ENCODE measurements at regions of chr2 and their contacts with region 1.

Region 1: GRCh38 chr2:106104332-106105062 is 89.6 kb downstream of the UXS1 start:
- DNase-seq: peak; percentile 46
- H3K4me3 ChIP-seq: no peak overlapping the region
- H3K27ac ChIP-seq: no peak overlapping the region
- H3K4me1 ChIP-seq: peaks cover 3% of the 10 kb centered on the region
- H3K27me3 ChIP-seq: no peaks in the 10 kb centered on the region
- CTCF ChIP-seq: peak; percentile 95 to 99

Region 2: GRCh38 chr2:105896765-105897163 is 207.7 kb before region 1 on chr2:
- CTCF ChIA-PET with region 1: no interaction called
- dilution Hi-C with region 1: no loop called
- in situ Hi-C with region 1: no loop called
- intact Hi-C with region 1: no loop called
- DNase-seq: no peak
- H3K4me3 ChIP-seq: no peak overlapping the region
- H3K27ac ChIP-seq: no peak overlapping the region
- H3K4me1 ChIP-seq: no peaks in the 10 kb centered on the region
- H3K27me3 ChIP-seq: no peaks in the 10 kb centered on the region
- CTCF ChIP-seq: peak in 1 of 2 donors; percentile 17

Region 3: DNA sequence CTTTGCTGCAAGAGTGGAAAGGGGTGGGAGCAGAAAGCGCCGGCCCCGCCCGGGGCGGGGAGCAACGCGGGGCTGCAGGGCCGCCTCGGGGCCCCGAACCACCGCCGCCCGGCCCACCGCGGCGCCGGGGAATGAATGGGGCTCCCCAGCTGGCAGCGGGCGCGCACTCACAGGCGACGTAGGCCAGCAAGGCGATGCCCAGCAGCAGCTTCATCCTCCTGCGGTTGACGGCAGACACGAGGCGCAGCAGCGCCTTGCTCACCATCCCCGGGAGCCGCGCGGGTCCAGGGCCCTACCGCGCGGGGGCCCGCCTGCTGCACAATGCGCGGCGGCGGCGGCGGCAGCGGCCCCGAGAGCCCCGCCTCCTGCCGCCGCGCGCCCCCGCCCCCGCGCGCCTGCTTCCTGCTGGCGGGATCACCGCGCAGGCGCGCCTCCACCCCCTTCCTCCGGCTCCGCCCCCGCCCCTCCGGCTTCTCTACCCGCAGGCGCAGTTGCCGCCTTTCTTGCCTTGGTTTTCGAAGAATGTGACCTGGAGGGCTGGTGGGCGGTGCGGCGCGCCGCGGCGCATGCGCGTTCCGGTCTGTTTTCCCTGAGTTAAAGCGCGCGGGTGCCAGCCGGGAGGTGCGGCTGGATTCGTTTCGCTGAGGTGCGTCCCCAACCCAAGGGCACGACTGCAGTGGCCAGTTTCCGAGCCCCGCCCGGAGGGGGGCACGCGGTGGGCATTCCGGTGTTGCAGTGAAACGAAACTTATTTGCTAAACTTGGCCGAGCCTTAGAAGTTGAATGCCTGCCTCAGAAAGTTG is 89.7 kb after region 1 on chr2 and contains the start of gene UXS1:
- CTCF ChIA-PET with region 1: no interaction called
- dilution Hi-C with region 1: no loop called
- in situ Hi-C with region 1: no loop called
- intact Hi-C with region 1: loop called (anchors 5 kb)
- DNase-seq: peak; percentile 95
- H3K4me3 ChIP-seq: peak within 1 kb of the TSS; percentile 82 to 96 (median 86)
- H3K27ac ChIP-seq: peak within 1 kb of the TSS; percentile 84
- H3K4me1 ChIP-seq: peaks cover 19% of the 10 kb centered on the region
- H3K27me3 ChIP-seq: no peaks in the 10 kb centered on the region
- CTCF ChIP-seq: no peak
- total RNA-seq, gene UXS1: 43.8 to 65.3 TPM

Region 4: DNA sequence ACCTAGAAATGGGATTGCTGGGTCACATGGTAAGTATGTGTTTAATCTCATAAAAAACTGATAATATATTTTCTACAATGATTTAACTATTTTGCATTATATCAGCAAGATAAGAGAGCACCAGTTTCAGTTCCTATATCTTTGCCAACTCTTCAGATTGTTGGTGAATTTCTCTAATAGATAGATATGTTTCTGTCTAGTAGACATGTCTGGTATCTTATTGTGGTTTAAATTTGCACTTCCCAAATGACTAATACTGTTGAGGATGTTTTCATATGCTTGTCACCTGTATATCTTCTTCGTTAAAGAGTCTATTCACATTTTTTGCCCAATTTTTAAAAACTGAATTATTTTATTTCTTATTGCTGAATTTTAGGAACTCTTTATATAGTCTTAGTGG is 203.4 kb after region 1 on chr2:
- CTCF ChIA-PET with region 1: no interaction called
- dilution Hi-C with region 1: no loop called
- in situ Hi-C with region 1: no loop called
- intact Hi-C with region 1: no loop called
- DNase-seq: no peak
- H3K4me3 ChIP-seq: no peak overlapping the region
- H3K27ac ChIP-seq: no peak overlapping the region
- H3K4me1 ChIP-seq: no peaks in the 10 kb centered on the region
- H3K27me3 ChIP-seq: peaks cover 2% of the 10 kb centered on the region
- CTCF ChIP-seq: no peak

Region 5: DNA sequence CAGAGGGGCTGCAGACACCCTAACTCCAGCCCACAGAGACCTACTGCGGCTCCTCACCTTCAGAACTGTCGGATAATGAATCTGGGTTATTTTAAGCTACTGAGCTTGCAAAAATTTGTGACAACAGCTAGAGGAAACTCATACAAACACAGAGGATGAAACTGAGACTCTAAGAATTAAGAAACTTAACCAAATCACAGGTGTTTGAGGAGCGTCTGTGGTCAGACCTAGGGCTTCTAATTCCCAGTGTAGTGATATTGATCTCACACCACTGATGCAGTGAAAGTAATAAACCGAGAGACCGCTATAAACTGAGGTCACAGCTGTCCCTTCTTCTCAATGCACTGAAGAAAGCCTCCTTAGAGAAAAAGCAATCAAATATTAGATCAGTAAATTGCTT is 253.6 kb after region 1 on chr2:
- CTCF ChIA-PET with region 1: no interaction called
- dilution Hi-C with region 1: loop called (anchors 25 kb)
- in situ Hi-C with region 1: no loop called
- intact Hi-C with region 1: no loop called
- DNase-seq: no peak
- H3K4me3 ChIP-seq: no peak overlapping the region
- H3K27ac ChIP-seq: no peak overlapping the region
- H3K4me1 ChIP-seq: no peaks in the 10 kb centered on the region
- H3K27me3 ChIP-seq: no peaks in the 10 kb centered on the region
- CTCF ChIP-seq: no peak

Region 6: DNA sequence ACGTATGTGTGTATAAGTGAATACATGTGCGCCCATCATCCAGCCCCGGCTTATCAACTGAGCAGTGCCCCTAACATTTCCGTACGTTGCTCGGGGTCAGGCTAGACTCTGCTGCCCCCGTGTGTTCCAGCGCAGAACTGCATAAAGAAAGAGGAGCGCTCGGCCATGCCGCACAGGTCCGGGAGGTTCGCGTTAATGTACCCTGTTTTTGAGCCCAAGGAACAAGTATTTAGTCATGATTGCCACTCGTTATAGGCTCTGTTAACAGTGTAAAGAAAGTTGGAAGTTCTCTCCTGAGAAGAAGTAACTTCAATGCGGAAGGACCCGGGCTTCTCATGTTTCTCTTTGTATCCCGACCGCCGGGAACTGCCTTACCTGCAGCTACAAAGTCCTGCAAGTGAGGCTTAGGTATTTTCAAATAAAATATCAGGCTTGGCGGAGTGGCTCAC is 438.3 kb after region 1 on chr2:
- CTCF ChIA-PET with region 1: no interaction called
- dilution Hi-C with region 1: loop called (anchors 25 kb)
- in situ Hi-C with region 1: loop called (anchors 10 to 25 kb)
- intact Hi-C with region 1: loop called (anchors 2 kb)
- DNase-seq: peak; percentile 27
- H3K4me3 ChIP-seq: peak overlapping the region in 1 of 3 experiments; percentile 9
- H3K27ac ChIP-seq: no peak overlapping the region
- H3K4me1 ChIP-seq: no peaks in the 10 kb centered on the region
- H3K27me3 ChIP-seq: no peaks in the 10 kb centered on the region
- CTCF ChIP-seq: peak; percentile 80 to 95

Measured in mammary epithelial cell (primary cell).